Prostate gland (tissue), 2 donors: ENCODE measurements at regions of chr12 and their contacts with region 1.

Region 1: DNA sequence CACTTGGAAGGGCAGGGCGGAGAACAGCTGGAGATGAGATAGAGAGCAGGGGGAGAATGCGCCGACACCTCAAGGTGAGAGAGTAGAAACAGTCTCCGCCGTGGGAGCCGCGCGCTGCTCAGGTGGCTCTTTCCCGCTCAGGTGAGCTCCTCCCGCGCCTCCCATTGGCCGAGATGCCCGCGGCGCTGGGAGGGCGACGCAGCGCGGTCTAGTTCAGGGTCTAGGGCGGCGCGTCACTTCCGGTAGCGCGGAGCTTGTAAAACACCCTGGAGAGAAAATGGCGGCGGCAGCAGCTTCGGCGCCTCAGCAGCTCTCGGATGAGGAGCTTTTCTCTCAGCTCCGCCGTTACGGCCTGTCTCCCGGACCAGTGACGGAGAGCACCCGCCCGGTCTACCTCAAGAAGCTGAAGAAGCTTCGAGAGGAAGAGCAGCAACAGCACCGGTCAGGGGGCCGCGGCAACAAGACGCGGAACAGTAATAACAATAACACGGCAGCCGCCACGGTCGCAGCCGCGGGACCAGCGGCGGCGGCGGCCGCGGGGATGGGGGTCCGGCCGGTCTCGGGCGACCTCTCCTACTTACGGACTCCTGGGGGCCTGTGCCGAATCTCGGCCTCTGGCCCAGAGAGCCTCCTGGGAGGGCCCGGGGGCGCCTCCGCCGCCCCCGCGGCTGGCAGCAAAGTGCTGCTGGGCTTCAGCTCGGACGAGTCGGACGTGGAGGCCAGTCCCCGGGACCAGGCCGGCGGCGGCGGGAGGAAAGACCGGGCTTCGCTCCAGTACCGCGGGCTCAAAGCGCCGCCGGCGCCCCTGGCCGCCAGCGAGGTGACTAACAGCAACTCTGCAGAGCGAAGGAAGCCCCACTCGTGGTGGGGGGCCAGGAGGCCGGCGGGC is at the start of gene LEMD3:
- DNase-seq: peak; percentile 97
- H3K4me3 ChIP-seq: peak within 1 kb of the TSS; percentile 76 to 81
- H3K27ac ChIP-seq: peak within 1 kb of the TSS; percentile 86 to 88
- H3K4me1 ChIP-seq: peaks cover 6% of the 10 kb centered on the region
- H3K27me3 ChIP-seq: no peaks in the 10 kb centered on the region
- CTCF ChIP-seq: no peak
- POLR2A ChIP-seq: peak; percentile 92
- total RNA-seq, gene LEMD3: 55.6 to 102 TPM

Region 2: GRCh38 chr12:64983771-64984278 is 185.7 kb before region 1 on chr12:
- intact Hi-C with region 1: no loop called
- DNase-seq: no peak
- H3K4me3 ChIP-seq: no peak overlapping the region
- H3K27ac ChIP-seq: no peak overlapping the region
- H3K4me1 ChIP-seq: no peaks in the 10 kb centered on the region
- H3K27me3 ChIP-seq: no peaks in the 10 kb centered on the region
- CTCF ChIP-seq: no peak
- POLR2A ChIP-seq: no peak

Region 3: DNA sequence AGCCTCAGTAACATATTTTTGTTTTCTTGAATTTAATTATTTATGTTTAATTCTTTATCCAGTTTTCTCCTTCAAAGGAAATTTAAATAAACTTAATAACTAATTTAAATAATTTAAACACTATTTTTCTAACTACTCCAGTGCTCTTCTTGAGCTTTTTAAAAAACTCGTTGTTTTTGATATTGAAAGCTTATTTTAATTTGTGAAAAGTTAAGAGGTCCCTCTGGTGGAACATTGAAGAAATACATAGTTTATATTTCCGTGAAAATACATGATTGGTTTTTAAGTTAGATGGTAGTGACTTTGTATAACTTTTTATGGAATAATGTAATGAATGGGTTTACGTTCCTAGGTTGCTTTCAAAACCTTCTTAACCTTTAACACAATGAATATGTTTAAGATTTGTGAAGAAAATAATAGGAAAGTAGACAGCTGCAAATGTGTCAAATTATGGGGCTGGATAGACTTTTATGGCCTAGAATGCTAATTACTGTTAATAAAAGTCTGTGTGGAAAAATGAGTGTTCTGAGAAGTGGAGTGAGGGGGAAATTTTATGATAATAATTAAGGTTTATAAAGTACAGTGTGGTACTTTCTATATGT is 63.0 kb after region 1 on chr12:
- intact Hi-C with region 1: loop called (anchors 10 kb)
- DNase-seq: no peak
- H3K4me3 ChIP-seq: no peak overlapping the region
- H3K27ac ChIP-seq: no peak overlapping the region
- H3K4me1 ChIP-seq: no peaks in the 10 kb centered on the region
- H3K27me3 ChIP-seq: no peaks in the 10 kb centered on the region
- CTCF ChIP-seq: peak in 3 of 4 experiments; percentile 25 to 39 (median 31)
- POLR2A ChIP-seq: no peak